OCI-LY7 (cell line): ENCODE measurements at regions of chr4 and their contacts with region 1.

Region 1: GRCh38 chr4:86999136-86999643 is 64.4 kb downstream of the AFF1 start:
- DNase-seq: no peak
- H3K4me3 ChIP-seq: peak overlapping the region; percentile 55
- H3K27ac ChIP-seq: peak overlapping the region; percentile 96
- H3K4me1 ChIP-seq: peaks cover 77% of the 10 kb centered on the region
- CTCF ChIP-seq: no peak

Region 2: DNA sequence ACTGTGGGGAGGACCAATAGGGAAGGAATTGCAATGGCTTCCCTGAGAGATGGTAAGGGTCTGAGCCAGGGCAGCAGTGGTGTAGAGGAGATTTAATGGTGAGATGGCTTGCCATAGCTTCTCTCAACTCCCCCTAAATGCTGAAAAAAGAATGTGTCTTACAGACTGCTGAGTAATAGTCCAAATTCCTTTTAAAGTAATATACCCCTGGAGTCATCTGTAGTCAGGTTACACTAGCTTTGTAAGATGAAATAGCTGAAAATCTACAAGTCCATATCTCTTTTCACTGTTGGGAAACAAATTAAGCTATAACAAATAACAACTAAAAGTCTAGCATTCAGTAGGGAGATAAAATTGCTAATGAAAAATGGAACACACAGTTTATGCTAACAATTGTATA is 672.8 kb before region 1 on chr4:
- CTCF ChIA-PET with region 1: no interaction called
- POLR2A ChIA-PET with region 1: no interaction called
- intact Hi-C with region 1: no loop called
- DNase-seq: no peak
- H3K4me3 ChIP-seq: no peak overlapping the region
- H3K27ac ChIP-seq: no peak overlapping the region
- H3K4me1 ChIP-seq: no peaks in the 10 kb centered on the region
- CTCF ChIP-seq: no peak

Region 3: GRCh38 chr4:86950831-86951525 is 48.2 kb before region 1 on chr4:
- CTCF ChIA-PET with region 1: no interaction called
- POLR2A ChIA-PET with region 1: interaction called, 13 read pairs
- intact Hi-C with region 1: no loop called
- DNase-seq: peak; percentile 67
- H3K4me3 ChIP-seq: peak overlapping the region; percentile 27
- H3K27ac ChIP-seq: peak overlapping the region; percentile 34
- H3K4me1 ChIP-seq: peaks cover 61% of the 10 kb centered on the region
- CTCF ChIP-seq: no peak

Region 4: DNA sequence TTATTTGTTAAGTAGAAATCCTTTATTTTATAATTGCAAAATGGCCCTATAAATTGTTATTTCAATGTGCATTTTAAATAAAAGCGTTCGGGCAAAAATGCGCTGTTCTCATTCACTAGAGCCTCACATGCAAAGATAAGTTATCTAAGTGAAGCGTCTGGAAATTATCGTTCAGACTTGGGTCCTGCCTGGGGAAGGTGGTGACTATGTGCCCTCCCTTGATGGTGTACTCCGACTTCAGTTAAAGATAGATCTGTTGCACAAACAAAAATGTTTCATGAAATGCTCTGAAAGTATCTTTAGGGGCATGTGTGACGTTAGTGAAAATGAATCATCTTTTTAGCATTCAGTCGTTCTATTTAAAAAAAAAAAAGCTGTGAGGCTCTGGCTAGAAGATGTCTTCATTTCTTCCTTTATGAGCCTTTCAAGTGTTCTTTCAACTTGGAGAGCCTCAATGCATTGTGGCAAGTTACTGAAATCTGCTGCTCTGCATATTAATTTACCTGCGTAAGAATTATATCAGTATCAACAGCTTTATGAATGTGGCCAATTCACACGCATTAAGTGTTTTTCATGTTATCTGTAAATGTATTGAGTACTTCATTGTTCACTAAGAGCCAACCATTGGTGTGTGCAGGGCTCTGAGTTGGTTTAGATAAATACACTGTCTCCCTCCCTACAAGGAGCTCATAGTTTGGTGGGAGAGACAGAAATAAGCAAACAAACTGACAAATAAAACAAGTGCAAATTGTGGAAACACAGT is 18.6 kb after region 1 on chr4:
- CTCF ChIA-PET with region 1: no interaction called
- POLR2A ChIA-PET with region 1: no interaction called
- intact Hi-C with region 1: no loop called
- DNase-seq: no peak
- H3K4me3 ChIP-seq: no peak overlapping the region
- H3K27ac ChIP-seq: peak overlapping the region; percentile 63
- H3K4me1 ChIP-seq: peaks cover 75% of the 10 kb centered on the region
- CTCF ChIP-seq: no peak